PC-3 (cell line): ENCODE measurements at regions of chr6 and their contacts with region 1.

Region 1: GRCh38 chr6:128807577-128807976 is 75.4 kb upstream of the LAMA2 start:
- DNase-seq: peak; percentile 44
- ATAC-seq: 0 out of 2 replicates have a peak, but pooled peaks have one; percentile 38
- H3K4me3 ChIP-seq: no peak overlapping the region
- H3K27ac ChIP-seq: no peak overlapping the region
- H3K4me1 ChIP-seq: no peaks in the 10 kb centered on the region
- H3K27me3 ChIP-seq: no peaks in the 10 kb centered on the region
- CTCF ChIP-seq: peak; percentile 67

Region 2: DNA sequence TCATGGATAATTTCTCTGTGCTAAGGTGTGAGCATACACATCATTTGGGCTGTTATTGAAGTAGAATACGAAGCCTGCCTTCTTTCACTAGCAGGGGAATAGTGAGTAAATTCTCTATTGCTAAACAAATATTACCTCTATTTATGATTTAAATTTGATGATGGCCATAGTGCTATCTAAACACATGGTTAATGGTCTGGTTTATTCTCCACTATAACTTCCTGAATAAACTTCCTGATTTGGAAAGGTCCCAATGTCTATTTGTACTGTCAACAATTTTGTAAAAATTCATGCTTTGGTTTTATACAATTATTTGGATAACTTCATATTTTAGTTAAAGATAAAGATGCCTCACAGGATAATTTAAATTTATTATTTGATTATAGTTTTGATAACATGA is 501.6 kb after region 1 on chr6:
- CTCF ChIA-PET with region 1: no interaction called
- POLR2A ChIA-PET with region 1: no interaction called
- intact Hi-C with region 1: loop called (anchors 5 kb)
- DNase-seq: peak; percentile 57
- ATAC-seq: peak; percentile 47
- H3K4me3 ChIP-seq: no peak overlapping the region
- H3K27ac ChIP-seq: peak overlapping the region; percentile 40
- H3K4me1 ChIP-seq: peaks cover 58% of the 10 kb centered on the region
- H3K27me3 ChIP-seq: no peaks in the 10 kb centered on the region
- CTCF ChIP-seq: no peak

Region 3: DNA sequence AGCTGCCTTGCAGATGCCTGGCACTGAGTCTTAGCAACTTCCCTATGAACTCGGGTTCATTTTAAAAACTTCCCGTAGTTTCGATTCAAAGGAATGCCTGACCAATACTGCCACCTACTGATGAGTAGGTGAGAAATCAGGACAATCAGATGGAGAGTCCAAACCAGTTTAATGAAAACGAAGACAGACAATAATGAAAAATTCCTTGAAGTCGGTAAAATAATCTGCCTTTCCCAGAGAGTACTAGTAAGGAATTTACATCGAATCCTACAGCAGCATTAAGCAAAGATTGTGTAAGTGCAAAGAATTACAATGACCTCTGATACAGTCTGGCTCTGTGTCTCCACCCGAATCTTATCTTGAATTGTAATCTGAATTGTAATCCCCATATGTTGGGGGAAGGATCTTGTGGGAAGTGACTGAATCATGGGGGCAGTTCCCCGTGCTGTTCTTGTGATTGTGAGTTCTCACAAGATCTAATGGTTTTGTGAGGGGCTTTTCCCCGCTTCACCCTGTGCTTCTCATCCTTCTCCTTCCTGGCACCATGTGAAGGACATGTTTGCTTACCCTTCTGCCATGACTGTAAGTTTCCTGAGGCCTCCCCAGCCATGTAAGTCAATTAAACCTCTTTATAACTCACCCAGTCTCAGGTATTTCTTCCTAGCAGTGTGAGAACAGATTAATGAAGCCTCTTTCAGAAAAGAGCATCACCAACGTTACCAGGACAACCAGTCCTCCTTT is 768.0 kb after region 1 on chr6:
- CTCF ChIA-PET with region 1: interaction called, 3 read pairs
- POLR2A ChIA-PET with region 1: no interaction called
- intact Hi-C with region 1: loop called (anchors 5 kb)
- DNase-seq: peak; percentile 70
- ATAC-seq: peak; percentile 71
- H3K4me3 ChIP-seq: peak overlapping the region; percentile 49
- H3K27ac ChIP-seq: peak overlapping the region; percentile 44
- H3K4me1 ChIP-seq: peaks cover 7% of the 10 kb centered on the region
- H3K27me3 ChIP-seq: no peaks in the 10 kb centered on the region
- CTCF ChIP-seq: peak; percentile 85